Left cardiac atrium (tissue), 4 donors: ENCODE measurements at regions of chr12 and their contacts with region 1.

Region 1: DNA sequence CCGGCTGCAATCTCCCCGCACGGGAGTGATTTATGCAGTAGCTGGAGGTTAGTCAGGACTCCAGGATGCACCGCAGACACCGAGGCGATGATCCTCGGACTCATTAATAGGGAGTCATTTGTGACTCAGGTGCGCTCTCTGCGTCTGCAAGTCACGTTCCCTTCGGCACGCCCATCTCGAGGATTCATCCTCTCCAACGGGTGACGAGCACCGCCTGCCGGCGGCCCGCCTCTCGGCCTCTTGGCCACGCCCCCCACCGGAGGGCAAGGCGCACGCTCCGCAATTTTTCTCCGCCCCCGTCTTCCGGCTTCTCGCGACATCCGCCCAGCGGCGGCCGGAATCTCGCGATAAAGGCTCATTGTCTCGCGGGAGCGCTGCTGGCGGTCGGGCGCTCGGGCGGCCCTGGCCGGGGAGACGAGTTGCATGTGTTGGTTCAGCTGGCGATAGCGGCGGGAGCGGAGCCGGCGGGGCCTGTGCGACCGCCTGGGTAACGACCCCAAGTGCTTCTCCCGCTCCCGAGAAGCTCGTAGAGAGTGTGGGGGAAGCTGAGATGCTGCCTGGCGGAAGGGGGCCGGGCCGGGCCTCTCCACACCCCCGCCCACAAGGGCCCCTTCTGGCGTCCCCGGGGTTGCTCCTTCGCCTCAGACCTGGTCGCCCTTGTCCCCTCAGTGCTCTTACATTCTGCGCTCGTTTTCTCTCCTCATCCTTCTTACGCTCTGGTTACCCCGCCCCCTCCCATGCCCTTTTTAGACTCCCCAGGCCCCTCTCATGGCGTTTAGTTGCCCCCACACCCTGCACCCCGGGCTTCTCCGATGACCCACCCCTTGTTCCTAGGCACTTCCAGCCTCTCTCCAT is at the start of gene DENR:
- DNase-seq: peak; percentile 98
- ATAC-seq: peak; percentile 98 to 99
- total RNA-seq, gene DENR: 22.9 to 26.5 TPM

Region 2: GRCh38 chr12:122526683-122527477 is 225.8 kb before region 1 on chr12 and contains the starts of genes KNTC1 and RSRC2:
- intact Hi-C with region 1: loop called in 1 of 2 experiments (anchors 10 kb)
- DNase-seq: peak; percentile 98
- ATAC-seq: peak; percentile 98 to 99
- total RNA-seq, gene KNTC1: 4.1 to 5.7 TPM
- total RNA-seq, gene RSRC2: 35.8 to 43.8 TPM

Region 3: GRCh38 chr12:122642009-122642408 is 110.7 kb before region 1 on chr12:
- intact Hi-C with region 1: loop called in 1 of 2 experiments (anchors 2 kb)
- DNase-seq: no peak
- ATAC-seq: no peak

Region 4: GRCh38 chr12:123085730-123086487 is 333.2 kb after region 1 on chr12:
- intact Hi-C with region 1: no loop called
- DNase-seq: peak; percentile 74
- ATAC-seq: peak; percentile 76 to 79